Common myeloid progenitor, CD34-positive (primary cell): ENCODE measurements at regions of chr10 and their contacts with region 1.

Region 1: GRCh38 chr10:26334932-26335573 is 103.1 kb upstream of the APBB1IP start:
- DNase-seq: peak; percentile 74 to 90 (median 85)
- H3K4me3 ChIP-seq: peak overlapping the region; percentile 13 to 82 (median 57)
- H3K27ac ChIP-seq: no peak overlapping the region
- H3K4me1 ChIP-seq: peaks cover 0 to 9% (median 2%) of the 10 kb centered on the region in 4 experiments
- H3K27me3 ChIP-seq: no peaks in the 10 kb centered on the region

Region 2: DNA sequence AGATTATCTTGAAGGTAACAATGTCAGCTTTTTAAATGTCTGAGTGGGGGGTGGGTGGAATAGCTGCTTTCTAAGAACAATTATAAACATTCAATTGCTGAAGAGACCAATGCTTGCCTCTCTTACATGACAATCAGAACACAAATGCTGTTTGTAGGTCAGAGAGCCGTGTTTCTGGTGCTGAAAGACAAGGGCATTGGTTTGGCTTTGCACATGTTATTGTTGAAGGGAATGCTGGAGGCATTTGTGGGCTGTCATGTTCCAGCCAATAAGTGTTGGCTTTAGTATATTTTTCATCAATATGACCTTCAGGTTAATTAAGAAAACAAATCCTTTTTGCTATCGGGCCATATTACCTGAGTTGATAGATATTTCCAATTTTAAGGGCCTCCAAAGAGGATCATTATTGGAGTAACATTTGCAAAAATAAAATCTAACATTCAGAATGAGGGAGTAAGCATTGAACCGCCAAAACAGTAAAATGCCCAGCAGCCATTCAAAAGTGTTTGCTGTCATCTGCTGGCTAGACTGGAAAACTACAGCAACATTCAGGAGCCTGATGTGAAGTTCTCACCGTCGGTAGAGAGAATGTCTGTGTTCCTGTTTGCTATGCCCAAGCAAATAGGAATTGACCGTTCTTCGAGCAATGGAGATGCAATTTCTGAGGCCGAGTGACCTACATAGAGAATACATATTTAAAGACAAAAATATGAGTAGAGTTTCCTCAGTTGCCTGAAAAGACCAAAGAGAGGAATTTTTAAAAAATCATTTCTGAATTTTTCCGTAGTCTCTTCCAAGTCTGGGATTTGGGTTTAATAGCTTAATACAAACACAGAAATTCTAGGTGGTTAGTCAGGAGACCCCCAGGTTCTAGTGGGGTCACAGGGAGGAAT is 221.9 kb after region 1 on chr10:
- CTCF ChIA-PET with region 1: interaction called, 62 read pairs
- POLR2A ChIA-PET with region 1: interaction called, 3 read pairs
- DNase-seq: peak; percentile 48 to 72 (median 68)
- H3K4me3 ChIP-seq: no peak overlapping the region
- H3K27ac ChIP-seq: no peak overlapping the region
- H3K4me1 ChIP-seq: peaks cover 0 to 12% (median 4%) of the 10 kb centered on the region in 4 experiments
- H3K27me3 ChIP-seq: no peaks in the 10 kb centered on the region